Ovary (tissue), 10 donors: ENCODE measurements at regions of chr1 and their contacts with region 1.

Region 1: DNA sequence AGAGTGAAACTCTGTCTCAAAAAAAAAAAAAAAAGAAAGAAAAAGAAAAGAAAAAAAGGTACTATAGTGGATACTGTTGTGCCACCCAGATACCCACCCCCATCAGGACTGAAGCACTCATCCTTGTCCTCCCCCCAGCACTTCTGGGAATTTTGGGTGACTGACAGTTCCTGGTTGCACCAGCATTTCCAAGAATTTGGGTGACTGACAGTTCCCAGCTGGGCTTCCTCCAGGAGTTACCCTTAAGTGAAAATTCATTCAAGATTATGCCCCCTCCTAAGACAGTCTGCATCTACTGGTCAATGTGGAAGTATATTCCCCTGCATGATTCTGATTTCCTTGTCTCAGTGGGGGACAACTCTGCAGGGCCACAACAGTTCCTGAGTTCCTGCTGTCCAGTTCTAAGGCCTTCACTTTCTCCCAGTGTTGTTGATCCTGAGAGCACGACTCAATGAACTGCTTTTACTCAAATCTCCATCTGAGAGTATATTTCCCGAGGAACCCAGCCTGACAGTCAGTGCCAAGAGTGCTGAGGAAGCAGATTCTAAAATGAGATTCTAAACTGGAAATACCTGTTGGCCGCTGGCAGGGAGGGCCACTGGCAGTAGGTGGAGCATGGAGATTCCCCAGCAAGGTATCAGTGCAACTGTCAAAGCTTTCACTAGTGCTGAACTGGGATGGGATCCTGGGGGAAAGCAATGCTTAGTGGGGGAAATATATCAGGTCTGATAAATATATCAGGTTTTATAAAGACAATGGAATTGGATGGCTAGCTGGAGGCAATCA is 18.5 kb downstream of the RIIAD1 start:
- DNase-seq: no peak
- H3K4me3 ChIP-seq: no peak overlapping the region
- H3K27ac ChIP-seq: no peak overlapping the region
- H3K4me1 ChIP-seq: no peaks in the 10 kb centered on the region
- H3K27me3 ChIP-seq: no peaks in the 10 kb centered on the region
- CTCF ChIP-seq: no peak
- EP300 ChIP-seq: no peak
- POLR2A ChIP-seq: no peak

Region 2: GRCh38 chr1:150922519-150922975 is 817.2 kb before region 1 on chr1:
- intact Hi-C with region 1: no loop called
- DNase-seq: peak; percentile 46 to 83 (median 60)
- H3K4me3 ChIP-seq: no peak overlapping the region
- H3K27ac ChIP-seq: no peak overlapping the region
- H3K4me1 ChIP-seq: no peaks in the 10 kb centered on the region
- H3K27me3 ChIP-seq: no peaks in the 10 kb centered on the region
- CTCF ChIP-seq: peak in 2 of 3 donors; percentile 55 to 56
- EP300 ChIP-seq: no peak
- POLR2A ChIP-seq: no peak

Region 3: DNA sequence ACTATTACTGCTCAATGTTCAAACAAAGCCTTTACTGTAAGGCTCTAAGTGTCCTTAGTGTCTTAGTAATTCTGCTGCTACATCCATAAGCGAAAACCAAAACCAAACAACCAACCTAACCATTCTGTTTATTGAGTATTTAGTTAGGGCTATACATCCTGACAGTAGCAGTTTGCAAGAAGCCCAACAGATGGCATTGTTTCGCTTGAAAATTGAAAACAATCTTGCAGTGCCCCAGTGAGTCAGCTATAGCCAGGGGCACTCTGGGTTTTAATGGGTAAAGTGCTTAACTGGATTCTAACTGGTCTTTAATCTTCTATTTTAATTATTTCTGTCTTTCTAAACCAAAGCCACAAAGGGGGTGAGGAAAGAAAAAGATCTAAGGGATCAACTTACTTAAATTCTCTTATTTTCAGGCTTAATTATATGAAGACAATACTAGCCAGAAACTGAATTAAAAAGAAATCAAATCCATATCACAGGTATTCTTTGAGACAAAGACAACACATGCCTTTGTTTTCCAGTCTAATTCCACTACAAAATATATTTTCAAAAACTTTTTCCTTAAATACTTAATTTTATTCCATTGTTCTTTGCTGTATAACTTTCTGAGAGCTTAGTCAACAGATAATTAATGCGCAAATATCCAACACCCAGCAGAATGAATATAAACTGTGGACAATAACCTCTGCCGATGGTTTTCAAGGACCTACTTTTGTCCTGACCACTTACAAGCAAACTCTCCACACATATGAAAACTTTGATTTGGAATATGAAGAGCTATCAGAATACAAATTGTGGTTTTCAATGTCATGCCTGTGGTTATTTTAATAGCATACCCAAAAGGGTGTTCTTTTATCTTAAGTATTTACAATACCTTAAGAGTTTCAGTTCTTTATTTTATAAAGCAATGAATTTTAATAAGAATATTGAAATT is 295.7 kb before region 1 on chr1:
- intact Hi-C with region 1: loop called in 2 of 4 experiments (anchors 10 kb)
- DNase-seq: peak in 2 of 5 donors; percentile 41 to 63
- H3K4me3 ChIP-seq: no peak overlapping the region
- H3K27ac ChIP-seq: no peak overlapping the region
- H3K4me1 ChIP-seq: peaks cover 6% of the 10 kb centered on the region
- H3K27me3 ChIP-seq: no peaks in the 10 kb centered on the region
- CTCF ChIP-seq: peak; percentile 8 to 62 (median 43)
- EP300 ChIP-seq: no peak
- POLR2A ChIP-seq: no peak

Region 4: GRCh38 chr1:151534665-151535278 is 205.0 kb before region 1 on chr1:
- intact Hi-C with region 1: loop called in 3 of 4 experiments (anchors 2 to 10 kb)
- DNase-seq: peak; percentile 60 to 80 (median 76)
- H3K4me3 ChIP-seq: no peak overlapping the region
- H3K27ac ChIP-seq: no peak overlapping the region
- H3K4me1 ChIP-seq: peaks cover 4% of the 10 kb centered on the region
- H3K27me3 ChIP-seq: no peaks in the 10 kb centered on the region
- CTCF ChIP-seq: peak; percentile 44 to 63 (median 48)
- EP300 ChIP-seq: no peak
- POLR2A ChIP-seq: no peak

Region 5: DNA sequence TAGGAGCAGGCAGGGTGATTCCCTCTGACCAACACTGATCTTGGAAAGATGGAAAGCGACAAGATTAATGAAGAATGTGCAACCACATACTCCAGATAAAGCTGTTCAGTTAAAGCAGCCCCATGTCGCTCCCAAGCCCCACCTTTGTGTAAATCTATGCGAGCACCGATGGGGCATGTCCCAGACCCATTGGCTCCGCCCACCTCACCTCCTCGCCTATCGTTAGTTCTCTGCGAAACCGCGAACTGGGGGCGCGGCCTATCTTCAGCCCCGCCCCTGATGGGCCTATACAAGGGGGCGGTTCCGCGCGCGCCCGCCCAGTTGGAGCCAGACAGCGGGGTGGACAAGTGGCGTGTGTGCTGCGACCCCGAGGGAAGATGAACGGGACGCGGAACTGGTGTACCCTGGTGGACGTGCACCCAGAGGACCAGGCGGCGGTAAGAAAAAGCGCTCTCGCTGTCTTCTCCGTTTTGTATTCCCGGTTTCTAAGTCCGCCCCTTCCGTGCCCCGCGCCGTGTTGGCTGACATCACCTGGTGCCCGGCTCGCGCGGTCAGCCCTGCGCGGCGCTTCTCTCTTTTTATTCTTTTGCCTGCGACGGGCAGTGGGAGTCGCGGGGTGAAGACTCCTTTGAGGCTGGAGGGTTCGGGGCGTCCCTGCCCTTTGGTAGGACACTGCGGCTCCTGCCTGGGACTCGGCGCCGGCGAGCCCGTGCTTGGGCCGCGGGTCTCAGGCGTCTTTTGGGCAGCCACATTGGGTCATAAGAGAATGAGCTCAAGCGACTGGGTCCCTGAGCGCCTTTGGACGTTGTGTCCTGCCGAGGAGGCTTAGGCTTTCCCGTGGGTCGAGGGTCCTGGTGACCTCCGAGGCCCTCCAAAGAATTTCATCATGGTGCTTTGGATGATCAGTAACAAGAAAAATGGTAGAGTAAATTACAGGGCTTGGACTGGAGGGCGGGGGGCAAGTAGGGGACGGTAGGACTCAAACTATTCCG is 199.5 kb before region 1 on chr1 and contains the start of gene TUFT1:
- intact Hi-C with region 1: loop called in 3 of 4 experiments (anchors 2 to 10 kb)
- DNase-seq: peak; percentile 92 to 95 (median 93)
- H3K4me3 ChIP-seq: peak within 1 kb of the TSS; percentile 62
- H3K27ac ChIP-seq: peak within 1 kb of the TSS; percentile 7 to 60
- H3K4me1 ChIP-seq: peaks cover 4% of the 10 kb centered on the region
- H3K27me3 ChIP-seq: no peaks in the 10 kb centered on the region
- CTCF ChIP-seq: no peak
- EP300 ChIP-seq: no peak
- POLR2A ChIP-seq: peak; percentile 93
- total RNA-seq, gene TUFT1: 5.0 to 10.1 (median 7.3) TPM

Region 6: GRCh38 chr1:151594143-151594625 is 145.6 kb before region 1 on chr1:
- intact Hi-C with region 1: loop called in 2 of 4 experiments (anchors 5 to 10 kb)
- DNase-seq: peak; percentile 70 to 80 (median 76)
- H3K4me3 ChIP-seq: no peak overlapping the region
- H3K27ac ChIP-seq: no peak overlapping the region
- H3K4me1 ChIP-seq: peaks cover 1% of the 10 kb centered on the region
- H3K27me3 ChIP-seq: no peaks in the 10 kb centered on the region
- CTCF ChIP-seq: peak; percentile 66 to 72 (median 67)
- EP300 ChIP-seq: no peak
- POLR2A ChIP-seq: no peak

Region 7: DNA sequence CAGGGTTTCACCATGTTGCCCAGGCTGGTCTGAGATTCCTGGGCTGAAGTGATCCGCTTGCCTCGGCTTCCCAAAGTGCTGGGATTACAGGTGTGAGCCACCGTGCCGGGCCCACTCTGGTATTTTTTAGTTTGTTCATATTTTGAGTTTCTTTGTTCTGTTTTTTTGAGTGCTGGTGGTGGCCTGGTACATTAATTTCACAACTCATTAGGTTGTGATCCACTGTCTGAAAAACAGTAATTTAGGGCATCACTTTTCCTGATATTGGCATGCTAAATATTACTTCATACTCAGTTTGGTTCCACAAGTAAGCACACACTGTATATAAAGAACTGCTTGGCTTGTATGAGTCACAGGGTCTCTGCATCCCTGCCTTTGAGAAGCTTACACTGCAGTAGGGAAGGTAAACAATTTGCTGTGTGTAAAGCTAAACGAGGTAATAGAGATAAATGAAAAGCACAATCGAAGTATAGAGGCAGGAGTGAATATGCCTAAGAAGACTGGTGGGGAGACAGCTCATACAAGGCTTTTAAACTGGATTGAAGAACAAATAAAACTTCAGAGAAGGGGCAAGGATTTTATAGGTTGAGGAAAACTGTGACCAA is 120.2 kb before region 1 on chr1:
- intact Hi-C with region 1: no loop called
- DNase-seq: no peak
- H3K4me3 ChIP-seq: no peak overlapping the region
- H3K27ac ChIP-seq: peak overlapping the region in 1 of 2 donors; percentile 3
- H3K4me1 ChIP-seq: peaks cover 5% of the 10 kb centered on the region
- H3K27me3 ChIP-seq: no peaks in the 10 kb centered on the region
- CTCF ChIP-seq: no peak
- EP300 ChIP-seq: no peak
- POLR2A ChIP-seq: no peak